ENCODE measurements at regions of chr12 and their contacts with region 1.

Region 1: GRCh38 chr12:4829161-4829792 is 80.4 kb upstream of the KCNA1 start:
- DNase-seq: no peak
- H3K4me3 Mint-ChIP-seq: peak overlapping the region; percentile 81
- H3K27ac Mint-ChIP-seq: peak overlapping the region; percentile 96
- H3K4me1 Mint-ChIP-seq: peaks cover 72% of the 10 kb centered on the region
- H3K27me3 Mint-ChIP-seq: no peaks in the 10 kb centered on the region

Region 2: GRCh38 chr12:4648501-4649357 is 180.5 kb before region 1 on chr12 and contains the starts of genes AKAP3 and NDUFA9:
- CTCF ChIA-PET with region 1: no interaction called
- POLR2A ChIA-PET with region 1: interaction called, 13 read pairs
- DNase-seq: peak; percentile 85
- H3K4me3 Mint-ChIP-seq: peak within 1 kb of the TSS; percentile 97
- H3K27ac Mint-ChIP-seq: peak within 1 kb of the TSS; percentile 79
- H3K4me1 Mint-ChIP-seq: peaks cover 54% of the 10 kb centered on the region
- H3K27me3 Mint-ChIP-seq: no peaks in the 10 kb centered on the region
- total RNA-seq, gene AKAP3: 3.1 to 3.4 TPM
- total RNA-seq, gene NDUFA9: 95.1 to 112 TPM

Region 3: GRCh38 chr12:4809013-4809448 is 20.2 kb before region 1 on chr12:
- CTCF ChIA-PET with region 1: interaction called, 6 read pairs
- POLR2A ChIA-PET with region 1: interaction called, 52 read pairs
- DNase-seq: no peak
- H3K4me3 Mint-ChIP-seq: peak overlapping the region; percentile 38
- H3K27ac Mint-ChIP-seq: no peak overlapping the region
- H3K4me1 Mint-ChIP-seq: peaks cover 47% of the 10 kb centered on the region
- H3K27me3 Mint-ChIP-seq: peaks cover 14% of the 10 kb centered on the region

Region 4: DNA sequence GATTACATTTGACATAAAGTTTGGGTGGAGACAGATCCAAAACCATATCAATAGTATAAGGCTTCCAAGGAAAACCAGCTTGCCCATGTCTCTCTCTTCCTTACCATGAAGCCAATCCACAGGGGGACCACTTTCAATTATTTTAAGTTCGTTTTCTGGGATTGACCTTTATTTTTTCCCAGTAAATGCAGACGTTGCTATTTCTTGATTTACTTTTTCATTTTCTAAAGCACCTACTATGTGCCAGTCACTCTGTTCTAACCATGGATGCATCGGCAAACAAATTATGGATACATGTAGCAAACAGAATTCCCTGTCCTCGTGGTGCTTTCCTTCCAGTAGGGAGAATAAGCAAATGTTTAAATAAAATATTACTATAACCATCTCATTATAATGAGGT is 14.6 kb after region 1 on chr12:
- CTCF ChIA-PET with region 1: interaction called, 10 read pairs
- POLR2A ChIA-PET with region 1: interaction called, 14 read pairs
- DNase-seq: no peak
- H3K4me3 Mint-ChIP-seq: no peak overlapping the region
- H3K27ac Mint-ChIP-seq: no peak overlapping the region
- H3K4me1 Mint-ChIP-seq: no peaks in the 10 kb centered on the region
- H3K27me3 Mint-ChIP-seq: peaks cover 36% of the 10 kb centered on the region

Region 5: GRCh38 chr12:4849115-4849541 is 19.9 kb after region 1 on chr12:
- CTCF ChIA-PET with region 1: interaction called, 13 read pairs
- POLR2A ChIA-PET with region 1: interaction called, 4 read pairs
- DNase-seq: no peak
- H3K4me3 Mint-ChIP-seq: no peak overlapping the region
- H3K27ac Mint-ChIP-seq: no peak overlapping the region
- H3K4me1 Mint-ChIP-seq: no peaks in the 10 kb centered on the region
- H3K27me3 Mint-ChIP-seq: peaks cover 15% of the 10 kb centered on the region

Region 6: GRCh38 chr12:4857472-4858291 is 28.4 kb after region 1 on chr12:
- CTCF ChIA-PET with region 1: interaction called, 13 read pairs
- POLR2A ChIA-PET with region 1: interaction called, 4 read pairs
- DNase-seq: peak; percentile 79
- H3K4me3 Mint-ChIP-seq: no peak overlapping the region
- H3K27ac Mint-ChIP-seq: no peak overlapping the region
- H3K4me1 Mint-ChIP-seq: peaks cover 20% of the 10 kb centered on the region
- H3K27me3 Mint-ChIP-seq: peaks cover 29% of the 10 kb centered on the region